CD4-positive, alpha-beta memory T cell (primary cell): ENCODE measurements at regions of chr1 and their contacts with region 1.

Region 1: GRCh38 chr1:3900119-3900968 is at the start of gene C1orf174:
- DNase-seq: peak; percentile 96 to 99 (median 98)
- H3K4me3 ChIP-seq: peak within 1 kb of the TSS; percentile 54 to 84
- H3K4me3 Mint-ChIP-seq: peak within 1 kb of the TSS; percentile 86 to 98 (median 94)
- H3K27ac ChIP-seq: peak within 1 kb of the TSS; percentile 81
- H3K27ac Mint-ChIP-seq: peak within 1 kb of the TSS; percentile 93 to 99 (median 96)
- H3K4me1 ChIP-seq: peaks cover 52% of the 10 kb centered on the region
- H3K4me1 Mint-ChIP-seq: peaks cover 30 to 71% (median 42%) of the 10 kb centered on the region in 4 donors
- H3K27me3 ChIP-seq: no peaks in the 10 kb centered on the region
- H3K27me3 Mint-ChIP-seq: no peaks in the 10 kb centered on the region
- total RNA-seq, gene C1orf174: 34.6 to 36.0 TPM

Region 2: DNA sequence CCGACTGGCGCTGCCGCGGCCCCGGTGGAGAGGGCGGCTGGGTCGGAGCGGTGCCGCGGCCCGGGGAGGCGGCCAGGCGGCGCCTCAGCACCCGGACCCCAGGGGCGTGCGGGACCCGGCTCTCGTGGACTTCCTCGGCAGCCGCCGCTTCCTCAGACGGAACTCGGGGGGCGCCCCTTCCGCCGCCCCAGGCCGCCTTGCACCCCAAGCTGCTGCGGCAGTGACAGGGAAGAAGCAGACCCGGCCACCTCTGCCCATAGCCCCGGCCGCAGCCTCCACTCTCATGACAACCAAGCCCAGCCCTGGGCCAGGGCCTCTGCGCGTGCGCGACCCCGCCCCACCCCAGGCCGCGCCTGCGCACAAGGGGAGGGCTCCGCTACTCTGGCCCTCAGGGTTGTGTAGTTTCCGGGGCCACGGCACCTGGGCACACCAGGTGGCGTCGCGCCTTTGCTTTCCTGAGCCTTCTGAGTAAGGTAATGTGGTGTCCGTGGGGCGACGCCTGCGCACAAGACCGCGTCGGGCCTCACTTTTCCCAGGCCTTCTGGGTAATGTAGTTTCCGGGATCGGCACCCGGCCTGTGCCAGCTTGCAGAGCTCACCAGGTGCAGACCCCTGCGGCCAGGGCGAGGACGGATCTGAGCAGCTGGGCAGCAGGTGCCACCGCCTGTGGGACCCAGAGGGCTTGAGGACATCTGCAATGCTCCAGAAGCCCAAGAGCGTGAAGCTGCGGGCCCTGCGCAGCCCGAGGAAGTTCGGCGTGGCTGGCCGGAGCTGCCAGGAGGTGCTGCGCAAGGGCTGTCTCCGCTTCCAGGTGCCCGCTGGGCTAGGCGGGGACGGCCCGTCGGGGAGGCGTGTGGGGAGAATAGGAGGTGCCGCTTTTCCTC is 43.2 kb before region 1 on chr1 and contains the starts of genes CEP104 and DFFB:
- CTCF ChIA-PET with region 1: interaction called, 5 read pairs
- POLR2A ChIA-PET with region 1: interaction called, 73 read pairs
- intact Hi-C with region 1: loop called (anchors 1 kb)
- DNase-seq: peak; percentile 99
- H3K4me3 ChIP-seq: peak within 1 kb of the TSS; percentile 88 to 96
- H3K4me3 Mint-ChIP-seq: peak within 1 kb of the TSS; percentile 95 to 99 (median 98)
- H3K27ac ChIP-seq: peak within 1 kb of the TSS; percentile 71
- H3K27ac Mint-ChIP-seq: peak within 1 kb of the TSS; percentile 88 to 98 (median 96)
- H3K4me1 ChIP-seq: peaks cover 35% of the 10 kb centered on the region
- H3K4me1 Mint-ChIP-seq: peaks cover 18 to 56% (median 35%) of the 10 kb centered on the region in 4 donors
- H3K27me3 ChIP-seq: no peaks in the 10 kb centered on the region
- H3K27me3 Mint-ChIP-seq: no peaks in the 10 kb centered on the region
- total RNA-seq, gene CEP104: 64.0 to 64.4 TPM
- total RNA-seq, gene DFFB: 23.2 to 26.1 TPM

Region 3: GRCh38 chr1:3978990-3979325 is 78.6 kb after region 1 on chr1:
- CTCF ChIA-PET with region 1: no interaction called
- POLR2A ChIA-PET with region 1: no interaction called
- intact Hi-C with region 1: no loop called
- DNase-seq: no peak
- H3K4me3 ChIP-seq: no peak overlapping the region
- H3K4me3 Mint-ChIP-seq: no peak overlapping the region
- H3K27ac ChIP-seq: no peak overlapping the region
- H3K27ac Mint-ChIP-seq: no peak overlapping the region
- H3K4me1 ChIP-seq: no peaks in the 10 kb centered on the region
- H3K4me1 Mint-ChIP-seq: no peaks in the 10 kb centered on the region
- H3K27me3 ChIP-seq: no peaks in the 10 kb centered on the region
- H3K27me3 Mint-ChIP-seq: peaks cover 6 to 14% of the 10 kb centered on the region in 2 donors

Region 4: GRCh38 chr1:4298361-4299083 is 398.2 kb after region 1 on chr1:
- CTCF ChIA-PET with region 1: no interaction called
- POLR2A ChIA-PET with region 1: no interaction called
- intact Hi-C with region 1: no loop called
- DNase-seq: no peak
- H3K4me3 ChIP-seq: no peak overlapping the region
- H3K4me3 Mint-ChIP-seq: no peak overlapping the region
- H3K27ac ChIP-seq: no peak overlapping the region
- H3K27ac Mint-ChIP-seq: no peak overlapping the region
- H3K4me1 ChIP-seq: no peaks in the 10 kb centered on the region
- H3K4me1 Mint-ChIP-seq: no peaks in the 10 kb centered on the region
- H3K27me3 ChIP-seq: no peaks in the 10 kb centered on the region
- H3K27me3 Mint-ChIP-seq: peaks cover 0 to 15% of the 10 kb centered on the region in 2 donors